Heart right ventricle (tissue), 16 donors: ENCODE measurements at regions of chr18 and their contacts with region 1.

Region 1: GRCh38 chr18:29892960-29893558 is 1149.5 kb downstream of the DSC3 start:
- DNase-seq: no peak
- ATAC-seq: no peak
- H3K4me3 ChIP-seq: no peak overlapping the region
- H3K27ac ChIP-seq: no peak overlapping the region
- H3K4me1 ChIP-seq: no peaks in the 10 kb centered on the region
- H3K27me3 ChIP-seq: no peaks in the 10 kb centered on the region
- CTCF ChIP-seq: peak in 7 of 9 donors; percentile 21 to 44 (median 31)

Region 2: DNA sequence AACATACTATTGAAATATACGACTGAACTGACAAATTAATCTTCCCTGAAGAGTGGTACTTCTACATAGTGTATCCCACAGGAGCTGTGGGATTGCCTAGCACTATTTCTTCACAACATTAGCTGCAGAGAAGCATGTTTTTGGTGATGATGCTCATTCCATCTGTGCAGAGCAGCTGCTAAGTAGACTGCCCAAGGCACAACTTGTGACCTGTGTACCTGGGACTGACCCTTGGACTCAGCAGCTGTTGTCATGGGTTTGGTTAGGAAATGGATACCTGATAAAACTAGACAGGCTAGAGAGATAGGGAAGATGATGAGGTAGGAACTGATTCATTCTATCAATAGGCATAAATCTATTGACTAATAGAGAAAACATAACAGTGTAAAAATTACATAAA is 54.5 kb before region 1 on chr18:
- intact Hi-C with region 1: loop called in 1 of 10 experiments (anchors 10 kb)
- DNase-seq: no peak
- ATAC-seq: no peak
- H3K4me3 ChIP-seq: no peak overlapping the region
- H3K27ac ChIP-seq: no peak overlapping the region
- H3K4me1 ChIP-seq: no peaks in the 10 kb centered on the region
- H3K27me3 ChIP-seq: no peaks in the 10 kb centered on the region
- CTCF ChIP-seq: no peak